ENCODE measurements at regions of chr11 and their contacts with region 1.

Region 1: GRCh38 chr11:62108017-62108750 is 15.6 kb upstream of the INCENP start:
- DNase-seq: no peak
- ATAC-seq: peak; percentile 70
- H3K4me3 Mint-ChIP-seq: no peak overlapping the region
- H3K27ac Mint-ChIP-seq: no peak overlapping the region
- H3K4me1 Mint-ChIP-seq: peaks cover 14% of the 10 kb centered on the region
- H3K27me3 Mint-ChIP-seq: peaks cover 4% of the 10 kb centered on the region; the same call in 1 of the 2 replicates
- CTCF ChIP-seq: peak; percentile 62

Region 2: DNA sequence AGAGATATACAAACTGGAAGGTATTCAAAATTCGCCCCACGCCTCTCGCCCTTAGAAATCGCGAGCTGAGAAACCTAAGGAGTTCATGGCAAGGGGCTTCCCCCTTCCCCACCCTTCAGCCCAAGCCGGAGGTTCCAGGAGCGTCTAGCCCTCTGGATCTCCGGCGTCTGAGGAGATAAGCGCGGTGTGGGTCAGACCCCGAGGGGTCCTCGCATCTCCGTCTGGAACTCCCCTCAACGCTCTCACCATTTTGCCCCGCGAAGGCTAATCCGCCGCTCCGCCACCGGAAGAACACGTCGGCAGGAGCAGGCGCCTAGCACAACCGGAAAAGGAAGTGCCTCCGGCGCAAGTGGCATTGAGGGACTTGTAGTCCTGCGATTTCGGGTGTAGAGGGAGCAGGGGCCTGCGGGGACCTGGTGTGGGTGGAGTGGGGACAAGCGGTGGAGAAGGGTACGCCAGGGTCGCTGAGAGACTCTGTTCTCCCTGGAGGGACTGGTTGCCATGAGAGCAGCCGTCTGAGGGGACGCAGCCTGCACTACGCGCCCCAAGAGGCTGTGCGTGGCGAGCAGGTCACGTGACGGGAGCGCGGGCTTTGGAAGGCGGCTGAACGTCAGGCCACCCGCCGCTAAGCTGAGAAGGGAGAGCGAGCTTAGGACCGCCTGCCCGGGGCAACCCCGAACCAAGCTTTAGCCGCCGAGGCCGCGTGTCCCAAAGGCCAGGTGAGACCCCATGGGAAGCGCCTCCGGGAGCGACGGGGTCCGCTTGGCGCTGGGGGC is 315.7 kb before region 1 on chr11 and contains the starts of genes FEN1 and TMEM258:
- CTCF ChIA-PET with region 1: interaction called, 26 read pairs
- POLR2A ChIA-PET with region 1: no interaction called
- DNase-seq: peak; percentile 88
- ATAC-seq: peak; percentile 77
- H3K4me3 Mint-ChIP-seq: peak within 1 kb of the TSS; percentile 94
- H3K27ac Mint-ChIP-seq: peak within 1 kb of the TSS; percentile 100
- H3K4me1 Mint-ChIP-seq: peaks cover 21% of the 10 kb centered on the region
- H3K27me3 Mint-ChIP-seq: no peaks in the 10 kb centered on the region; the same call in 1 of the 2 replicates
- CTCF ChIP-seq: no peak
- total RNA-seq, gene FEN1: 72.3 to 96.3 TPM (median 73.2 TPM) in 3 replicates
- total RNA-seq, gene TMEM258: 175 to 192 TPM (median 190 TPM) in 3 replicates

Region 3: GRCh38 chr11:61885166-61885778 is 222.9 kb before region 1 on chr11:
- CTCF ChIA-PET with region 1: interaction called, 13 read pairs
- POLR2A ChIA-PET with region 1: no interaction called
- DNase-seq: no peak
- ATAC-seq: peak; percentile 27
- H3K4me3 Mint-ChIP-seq: no peak overlapping the region
- H3K27ac Mint-ChIP-seq: no peak overlapping the region
- H3K4me1 Mint-ChIP-seq: peaks cover 22% of the 10 kb centered on the region
- H3K27me3 Mint-ChIP-seq: 0 out of 2 replicates have a peak, but pooled peaks cover 4% of the 10 kb centered on the region
- CTCF ChIP-seq: no peak

Region 4: GRCh38 chr11:61923166-61924063 is 184.8 kb before region 1 on chr11:
- CTCF ChIA-PET with region 1: interaction called, 13 read pairs
- POLR2A ChIA-PET with region 1: no interaction called
- DNase-seq: peak; percentile 69
- ATAC-seq: peak; percentile 67
- H3K4me3 Mint-ChIP-seq: peak overlapping the region; percentile 41
- H3K27ac Mint-ChIP-seq: peak overlapping the region; percentile 94
- H3K4me1 Mint-ChIP-seq: peaks cover 42% of the 10 kb centered on the region
- H3K27me3 Mint-ChIP-seq: peaks cover 11% of the 10 kb centered on the region
- CTCF ChIP-seq: no peak

Region 5: DNA sequence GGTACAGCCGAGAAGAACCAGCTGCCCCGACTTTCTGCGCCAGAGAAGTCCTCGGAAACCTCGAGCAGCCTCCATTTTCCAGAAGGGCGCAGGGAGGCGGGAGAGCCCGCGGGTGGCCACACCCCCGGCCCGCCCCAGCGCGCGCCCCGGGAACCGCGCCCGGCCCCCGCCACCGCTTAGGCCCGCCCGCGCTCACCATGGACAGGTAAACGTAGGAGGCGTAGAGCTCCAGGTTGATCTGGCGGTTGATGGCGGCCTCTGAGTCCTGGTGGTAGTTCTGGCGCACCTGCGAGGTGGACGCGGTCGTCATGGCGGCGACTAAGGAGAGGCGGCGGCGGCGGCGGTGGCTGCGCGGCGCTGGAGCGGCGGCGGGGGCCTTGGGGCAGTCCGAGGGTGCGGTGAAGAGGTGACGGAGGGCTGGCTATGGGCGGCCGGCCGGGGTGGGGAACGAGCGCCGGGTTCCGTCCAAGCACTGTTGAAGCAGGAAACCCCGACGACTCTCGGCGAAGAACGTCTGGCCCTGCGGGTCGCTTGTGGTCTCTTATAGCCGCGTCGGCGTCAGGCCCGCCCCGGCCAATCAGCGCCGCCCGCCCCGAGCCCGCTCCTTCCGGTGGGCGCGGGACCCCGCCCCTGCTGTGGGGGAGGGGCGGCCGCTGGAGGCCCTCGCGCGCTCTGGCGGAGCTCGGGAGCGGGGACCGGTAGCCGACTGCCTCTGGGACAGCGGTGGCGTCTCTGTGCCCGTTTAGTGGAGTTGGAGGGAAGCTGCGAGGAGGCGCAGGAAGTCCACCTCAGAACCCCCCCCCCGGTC is 140.9 kb before region 1 on chr11 and contains the start of gene FTH1:
- CTCF ChIA-PET with region 1: interaction called, 19 read pairs
- POLR2A ChIA-PET with region 1: interaction called, 7 read pairs
- DNase-seq: peak; percentile 85
- ATAC-seq: peak; percentile 76
- H3K4me3 Mint-ChIP-seq: peak within 1 kb of the TSS; percentile 94
- H3K27ac Mint-ChIP-seq: peak within 1 kb of the TSS; percentile 80
- H3K4me1 Mint-ChIP-seq: peaks cover 42% of the 10 kb centered on the region
- H3K27me3 Mint-ChIP-seq: no peaks in the 10 kb centered on the region; the same call in 1 of the 2 replicates
- CTCF ChIP-seq: no peak
- total RNA-seq, gene FTH1: 1,108 to 1,272 TPM (median 1,247 TPM) in 3 replicates

Measured in WTC11 (cell line).